Activated CD4-positive, alpha-beta T cell treated with anti-CD3 and anti-CD28 coated beads, Interleukin-2, amount 10 ng/mL, durations not matched to agents 7 days and 5 days (primary cell): ENCODE measurements at regions of chr2 and their contacts with region 1.

Region 1: DNA sequence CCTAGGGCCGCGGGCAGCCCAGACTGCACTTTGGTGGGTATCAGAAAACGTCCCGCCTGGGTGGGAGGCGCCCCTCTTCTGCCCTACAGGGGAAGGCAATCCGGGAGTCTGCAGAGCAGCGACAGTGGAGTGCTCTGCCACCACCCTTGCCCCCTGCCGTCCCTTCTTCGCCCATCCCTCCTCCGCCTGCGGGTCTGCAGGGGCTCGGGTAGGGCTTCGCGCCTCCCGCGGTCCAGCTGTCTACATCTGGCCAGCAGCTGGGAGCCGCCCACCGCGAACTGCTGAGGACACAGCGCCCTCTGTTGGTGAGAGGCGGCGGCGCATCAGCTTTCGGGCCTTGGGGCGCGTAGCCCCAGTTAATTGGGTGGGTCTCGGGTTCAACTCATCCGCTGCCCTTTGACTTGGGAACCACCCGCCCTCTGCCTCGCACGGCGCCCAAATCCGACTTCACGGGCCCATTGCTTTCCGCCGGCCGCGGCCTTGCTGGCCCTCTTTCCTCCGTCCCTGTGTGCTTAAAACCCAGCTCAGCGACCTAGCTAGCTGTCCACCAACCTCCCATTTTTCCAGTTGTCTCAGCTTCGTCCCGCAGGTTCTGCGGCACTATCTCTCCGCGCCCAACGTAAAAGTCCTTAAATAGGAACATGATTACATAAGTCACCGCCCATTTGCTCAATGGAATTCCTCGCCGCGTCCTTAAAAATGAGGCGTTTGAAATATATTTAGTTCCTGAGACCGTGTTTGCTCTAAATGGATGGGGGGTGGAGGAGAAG is 17.6 kb downstream of the WNT10A start:
- DNase-seq: peak; percentile 75
- H3K4me3 Mint-ChIP-seq: peak overlapping the region; percentile 58
- H3K27ac Mint-ChIP-seq: no peak overlapping the region
- H3K4me1 Mint-ChIP-seq: peaks cover 44% of the 10 kb centered on the region
- H3K27me3 Mint-ChIP-seq: peaks cover 64% of the 10 kb centered on the region

Region 2: GRCh38 chr2:218859556-218859987 is 38.7 kb before region 1 on chr2 and contains the start of gene WNT6:
- CTCF ChIA-PET with region 1: interaction called, 12 read pairs
- POLR2A ChIA-PET with region 1: no interaction called
- DNase-seq: no peak
- H3K4me3 Mint-ChIP-seq: peak within 1 kb of the TSS; percentile 32
- H3K27ac Mint-ChIP-seq: no peak within 1 kb of the TSS
- H3K4me1 Mint-ChIP-seq: peaks cover 12% of the 10 kb centered on the region
- H3K27me3 Mint-ChIP-seq: peaks cover 85% of the 10 kb centered on the region
- total RNA-seq, gene WNT6: not detected

Region 3: GRCh38 chr2:218908721-218909619 is 10.7 kb after region 1 on chr2:
- CTCF ChIA-PET with region 1: interaction called, 669 read pairs
- POLR2A ChIA-PET with region 1: no interaction called
- DNase-seq: peak; percentile 88
- H3K4me3 Mint-ChIP-seq: peak overlapping the region; percentile 81
- H3K27ac Mint-ChIP-seq: peak overlapping the region; percentile 88
- H3K4me1 Mint-ChIP-seq: peaks cover 17% of the 10 kb centered on the region
- H3K27me3 Mint-ChIP-seq: peaks cover 17% of the 10 kb centered on the region

Region 4: DNA sequence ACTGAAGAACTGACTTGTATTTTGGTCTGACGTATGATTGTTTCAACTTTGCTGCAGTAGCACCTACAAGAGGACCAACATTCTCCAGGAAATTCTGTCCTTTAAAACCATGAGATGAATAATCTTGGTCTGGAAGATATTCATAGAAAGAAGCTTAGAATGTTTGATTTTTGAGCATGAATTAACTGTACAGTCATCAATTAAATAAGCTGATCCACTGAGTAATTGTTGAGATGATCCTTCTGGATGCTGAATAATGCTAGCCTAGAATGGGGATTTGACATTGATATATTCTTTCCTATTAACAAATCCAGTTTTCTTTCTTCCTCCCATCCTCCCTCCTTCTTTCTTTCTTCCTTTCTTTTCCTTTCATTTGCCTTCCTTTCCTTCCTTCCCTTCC is 22.2 kb after region 1 on chr2:
- CTCF ChIA-PET with region 1: no interaction called
- POLR2A ChIA-PET with region 1: no interaction called
- DNase-seq: no peak
- H3K4me3 Mint-ChIP-seq: no peak overlapping the region
- H3K27ac Mint-ChIP-seq: no peak overlapping the region
- H3K4me1 Mint-ChIP-seq: no peaks in the 10 kb centered on the region
- H3K27me3 Mint-ChIP-seq: peaks cover 30% of the 10 kb centered on the region

Region 5: DNA sequence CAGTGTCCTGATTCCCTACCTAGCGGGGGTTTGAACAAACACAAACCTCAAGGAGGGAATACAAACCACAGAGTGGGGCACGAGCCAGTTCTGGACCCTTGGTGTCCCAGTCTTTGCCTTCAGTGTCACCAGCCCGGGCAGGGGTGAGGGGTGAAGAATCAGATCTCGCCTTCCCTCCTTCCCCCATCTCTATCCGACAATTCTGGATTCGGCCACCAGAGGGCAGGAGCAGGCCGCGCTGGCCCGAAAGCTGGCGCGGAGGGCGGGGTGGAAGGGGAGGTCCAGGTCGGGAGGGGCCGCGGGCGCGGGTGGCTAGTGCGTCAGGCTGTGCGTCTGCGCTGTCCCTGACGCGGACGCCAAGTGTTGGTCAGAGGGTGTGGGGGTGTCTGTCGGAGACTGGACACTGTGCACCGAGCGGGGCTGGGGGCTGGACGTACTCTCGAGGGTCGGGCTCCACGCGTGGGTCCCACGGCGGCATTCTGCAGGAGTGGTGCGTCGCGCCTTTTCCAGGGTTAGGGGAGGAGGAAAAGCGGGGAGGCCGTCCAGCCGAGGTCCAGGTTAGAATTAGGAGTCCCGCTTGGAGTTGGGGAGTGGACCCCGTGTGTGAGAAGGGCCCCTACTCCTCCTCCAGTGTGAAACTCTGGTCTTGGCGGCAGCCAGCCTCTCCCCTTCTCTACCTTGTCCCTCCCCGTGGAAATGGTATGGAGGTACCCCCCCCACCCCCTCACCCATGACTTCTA is 97.8 kb after region 1 on chr2:
- CTCF ChIA-PET with region 1: interaction called, 10 read pairs
- POLR2A ChIA-PET with region 1: no interaction called
- DNase-seq: peak; percentile 74
- H3K4me3 Mint-ChIP-seq: no peak overlapping the region
- H3K27ac Mint-ChIP-seq: no peak overlapping the region
- H3K4me1 Mint-ChIP-seq: peaks cover 2% of the 10 kb centered on the region
- H3K27me3 Mint-ChIP-seq: peaks cover 81% of the 10 kb centered on the region